ENCODE measurements at regions of chr19 and their contacts with region 1.

Region 1: DNA sequence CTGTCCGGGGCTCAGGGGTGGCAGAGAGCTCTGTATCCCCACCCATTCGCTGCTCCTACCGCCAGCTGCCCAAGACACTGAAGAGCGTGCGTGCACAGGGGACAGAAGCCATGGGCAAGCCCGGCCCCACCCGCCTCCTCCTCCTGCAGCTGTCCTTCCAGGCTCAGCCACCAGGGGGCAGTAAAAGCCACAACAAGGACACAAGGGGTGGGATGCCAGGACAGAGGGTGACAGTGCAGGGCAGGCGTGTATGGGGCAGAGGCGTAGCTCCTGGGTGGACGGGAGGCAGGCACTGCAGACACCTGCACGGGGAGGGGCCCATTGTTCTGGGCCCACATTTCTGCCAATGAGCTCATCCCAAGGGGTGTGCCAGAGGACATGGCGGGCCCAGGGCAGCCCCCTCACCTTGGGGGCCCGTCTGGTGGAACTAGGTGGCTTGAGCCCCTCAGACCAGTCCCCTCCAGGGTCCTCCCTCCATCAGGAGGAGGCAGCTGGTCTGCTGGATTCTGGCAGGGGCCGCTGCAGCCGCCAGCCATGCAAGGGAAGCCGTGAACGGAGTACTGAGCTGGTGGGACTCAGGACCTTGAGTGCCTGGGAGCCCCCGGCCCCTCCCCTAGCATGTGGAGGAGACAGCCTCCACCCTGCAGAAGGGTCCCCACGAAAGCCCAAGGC is 61.1 kb downstream of the MLLT1 start:
- DNase-seq: peak; percentile 83
- H3K4me3 ChIP-seq: no peak overlapping the region
- H3K27ac ChIP-seq: no peak overlapping the region
- H3K4me1 ChIP-seq: no peaks in the 10 kb centered on the region
- CTCF ChIP-seq: peak; percentile 84

Region 2: DNA sequence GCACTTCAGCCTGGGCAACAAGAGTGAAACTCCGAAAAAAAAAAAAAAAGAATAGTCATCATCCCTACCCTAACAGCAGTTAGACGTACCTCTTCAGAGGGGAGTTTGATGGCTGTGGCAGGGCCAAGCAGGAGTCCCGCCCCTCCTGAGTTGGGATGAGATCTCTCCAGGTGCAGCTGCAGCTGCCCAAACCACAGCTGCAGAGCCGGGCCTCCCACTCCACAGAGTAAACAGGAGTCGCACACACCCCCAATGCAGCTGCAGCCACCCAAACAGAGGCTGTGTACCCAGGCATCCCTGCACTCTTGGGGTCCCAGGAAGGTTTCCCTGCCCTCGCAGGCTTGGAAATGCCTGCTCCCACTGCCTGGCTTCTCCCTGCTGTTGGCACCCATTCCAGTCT is 78.6 kb after region 1 on chr19:
- CTCF ChIA-PET with region 1: interaction called, 4 read pairs
- POLR2A ChIA-PET with region 1: no interaction called
- intact Hi-C with region 1: loop called (anchors 5 kb)
- DNase-seq: no peak
- H3K4me3 ChIP-seq: no peak overlapping the region
- H3K27ac ChIP-seq: no peak overlapping the region
- H3K4me1 ChIP-seq: no peaks in the 10 kb centered on the region
- CTCF ChIP-seq: no peak

Measured in OCI-LY7 (cell line).